Posterior vena cava (tissue), 2 donors: ENCODE measurements at regions of chr4 and their contacts with region 1.

Region 1: GRCh38 chr4:114373508-114373907 is 225.1 kb upstream of the UGT8 start:
- DNase-seq: no peak

Region 2: GRCh38 chr4:113073451-113074005 is 1300.0 kb before region 1 on chr4:
- intact Hi-C with region 1: loop called in 1 of 2 experiments (anchors 5 kb)
- DNase-seq: no peak

Region 3: GRCh38 chr4:114146947-114147618 is 226.4 kb before region 1 on chr4:
- intact Hi-C with region 1: no loop called
- DNase-seq: peak; percentile 54

Region 4: GRCh38 chr4:114229706-114230105 is 143.8 kb before region 1 on chr4:
- intact Hi-C with region 1: no loop called
- DNase-seq: no peak

Region 5: GRCh38 chr4:114361249-114361648 is 12.3 kb before region 1 on chr4:
- intact Hi-C with region 1: no loop called
- DNase-seq: no peak